CD14-positive monocyte (primary cell): ENCODE measurements at regions of chr17 and their contacts with region 1.

Region 1: GRCh38 chr17:7306911-7307686 is at the start of gene EIF5A:
- DNase-seq: peak; percentile 100
- H3K4me3 ChIP-seq: peak within 1 kb of the TSS; percentile 66 to 97 (median 72)
- H3K4me3 Mint-ChIP-seq: peak within 1 kb of the TSS; percentile 85 to 93
- H3K27ac ChIP-seq: peak within 1 kb of the TSS; percentile 95 to 96
- H3K27ac Mint-ChIP-seq: peak within 1 kb of the TSS; percentile 96 to 100 (median 99)
- H3K4me1 ChIP-seq: peaks cover 24 to 26% of the 10 kb centered on the region in 2 donors
- H3K4me1 Mint-ChIP-seq: peaks cover 21% of the 10 kb centered on the region
- H3K27me3 ChIP-seq: no peaks in the 10 kb centered on the region
- H3K27me3 Mint-ChIP-seq: peaks cover 0 to 5% (median 4%) of the 10 kb centered on the region in 3 donors
- CTCF ChIP-seq: no peak
- polyA plus RNA-seq, gene EIF5A: 465 to 511 (median 485) TPM

Region 2: GRCh38 chr17:7239091-7240027 is 67.7 kb before region 1 on chr17 and contains the start of gene PHF23:
- intact Hi-C with region 1: loop called (anchors 5 kb)
- DNase-seq: peak; percentile 98 to 99 (median 99)
- H3K4me3 ChIP-seq: peak within 1 kb of the TSS; percentile 95 to 100 (median 98)
- H3K4me3 Mint-ChIP-seq: peak within 1 kb of the TSS; percentile 98 to 99
- H3K27ac ChIP-seq: peak within 1 kb of the TSS; percentile 64 to 100
- H3K27ac Mint-ChIP-seq: peak within 1 kb of the TSS; percentile 99 to 100 (median 100)
- H3K4me1 ChIP-seq: peaks cover 54 to 64% of the 10 kb centered on the region in 2 donors
- H3K4me1 Mint-ChIP-seq: peaks cover 57% of the 10 kb centered on the region
- H3K27me3 ChIP-seq: no peaks in the 10 kb centered on the region
- H3K27me3 Mint-ChIP-seq: peaks cover 0 to 5% (median 0%) of the 10 kb centered on the region in 3 donors
- CTCF ChIP-seq: no peak
- polyA plus RNA-seq, gene PHF23: 12.0 to 18.0 (median 12.9) TPM

Region 3: DNA sequence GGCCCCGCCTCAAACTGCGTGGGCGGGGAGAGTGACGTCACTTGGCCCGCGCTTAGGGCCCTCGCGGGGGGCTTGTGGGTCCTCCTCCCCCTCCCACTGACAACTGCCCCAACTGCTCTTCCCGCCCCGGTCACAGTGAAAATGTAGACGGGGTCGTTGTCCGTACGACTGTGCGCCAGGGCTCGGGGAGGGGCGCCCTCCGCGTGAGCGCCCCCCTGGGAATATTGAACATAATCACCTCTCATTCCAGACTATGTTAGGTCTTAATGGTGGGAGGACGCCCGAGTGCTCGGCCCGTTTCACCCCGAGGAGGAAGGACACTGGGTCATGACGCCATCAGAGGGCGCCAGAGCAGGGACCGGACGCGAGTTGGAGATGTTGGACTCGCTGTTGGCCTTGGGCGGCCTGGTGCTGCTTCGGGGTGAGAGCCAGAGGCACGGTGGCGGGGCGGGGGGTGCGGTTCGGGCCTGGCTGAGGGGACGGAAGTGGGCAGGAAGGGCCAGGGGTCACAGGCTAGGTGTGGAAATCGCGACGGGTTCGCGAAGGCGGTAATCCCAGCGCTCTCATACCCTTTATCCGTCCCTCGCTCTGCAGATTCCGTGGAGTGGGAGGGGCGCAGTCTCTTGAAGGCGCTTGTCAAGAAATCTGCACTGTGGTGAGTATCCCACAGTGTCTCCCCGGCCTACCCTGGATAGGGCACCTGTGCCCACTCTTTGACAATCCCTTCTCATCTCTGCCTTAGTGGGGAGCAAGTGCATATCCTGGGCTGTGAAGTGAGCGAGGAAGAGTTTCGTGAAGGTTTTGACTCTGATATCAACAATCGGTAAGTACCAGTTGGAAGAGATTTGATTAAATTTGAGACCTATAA is 54.7 kb before region 1 on chr17 and contains the start of gene ELP5:
- intact Hi-C with region 1: loop called (anchors 2 to 5 kb)
- DNase-seq: peak; percentile 88 to 96 (median 93)
- H3K4me3 ChIP-seq: peak within 1 kb of the TSS; percentile 73 to 93 (median 87)
- H3K4me3 Mint-ChIP-seq: peak within 1 kb of the TSS; percentile 90 to 95
- H3K27ac ChIP-seq: peak within 1 kb of the TSS; percentile 100
- H3K27ac Mint-ChIP-seq: peak within 1 kb of the TSS; percentile 99 to 100 (median 100)
- H3K4me1 ChIP-seq: peaks cover 31 to 36% of the 10 kb centered on the region in 2 donors
- H3K4me1 Mint-ChIP-seq: peaks cover 34% of the 10 kb centered on the region
- H3K27me3 ChIP-seq: no peaks in the 10 kb centered on the region
- H3K27me3 Mint-ChIP-seq: no peaks in the 10 kb centered on the region
- CTCF ChIP-seq: peak; percentile 28
- polyA plus RNA-seq, gene ELP5: 36.1 to 49.5 (median 44.1) TPM

Region 4: DNA sequence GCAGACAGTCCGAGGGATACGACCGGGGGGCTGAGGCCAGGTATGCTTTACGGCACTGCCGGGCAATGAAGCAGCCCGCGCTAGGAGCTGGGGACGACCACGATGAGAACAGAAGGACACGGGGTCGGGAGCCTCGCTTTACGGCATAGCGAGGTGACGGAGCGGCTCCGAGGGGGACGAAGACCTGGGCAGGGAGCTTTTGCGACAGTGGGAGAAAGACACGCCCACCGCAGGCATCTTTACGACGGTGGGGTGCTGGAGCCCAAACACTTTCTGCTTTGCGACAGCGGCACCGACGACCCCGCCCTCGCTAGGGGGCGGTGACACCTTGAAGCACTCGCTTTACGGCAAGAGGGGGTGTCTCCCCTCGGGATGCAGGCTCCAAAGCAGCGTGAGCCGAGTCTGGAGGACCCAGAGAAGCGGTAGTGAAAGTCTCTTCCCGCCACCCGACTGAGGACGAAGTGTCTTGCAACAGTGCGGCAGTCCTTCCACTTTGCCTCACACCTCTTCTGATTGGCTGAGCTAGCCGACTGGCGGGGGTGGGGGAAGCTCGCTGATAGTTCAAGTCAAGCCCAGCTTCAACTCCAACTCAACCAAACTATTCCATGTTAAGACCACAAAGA is 22.4 kb after region 1 on chr17:
- intact Hi-C with region 1: loop called in 1 of 2 experiments (anchors 2 kb)
- DNase-seq: peak; percentile 92 to 100 (median 99)
- H3K4me3 ChIP-seq: peak overlapping the region; percentile 80 to 91 (median 81)
- H3K4me3 Mint-ChIP-seq: peak overlapping the region; percentile 91 to 98
- H3K27ac ChIP-seq: peak overlapping the region; percentile 92
- H3K27ac Mint-ChIP-seq: peak overlapping the region; percentile 96 to 100 (median 98)
- H3K4me1 ChIP-seq: peaks cover 34 to 39% of the 10 kb centered on the region in 2 donors
- H3K4me1 Mint-ChIP-seq: peaks cover 36% of the 10 kb centered on the region
- H3K27me3 ChIP-seq: no peaks in the 10 kb centered on the region
- H3K27me3 Mint-ChIP-seq: peaks cover 0 to 6% (median 0%) of the 10 kb centered on the region in 3 donors
- CTCF ChIP-seq: no peak

Region 5: GRCh38 chr17:7403977-7404736 is 97.1 kb after region 1 on chr17 and contains the start of gene TMEM256:
- intact Hi-C with region 1: no loop called
- DNase-seq: peak; percentile 98
- H3K4me3 ChIP-seq: peak within 1 kb of the TSS; percentile 57 to 86 (median 62)
- H3K4me3 Mint-ChIP-seq: peak within 1 kb of the TSS; percentile 86 to 95
- H3K27ac ChIP-seq: peak within 1 kb of the TSS; percentile 59 to 70
- H3K27ac Mint-ChIP-seq: peak within 1 kb of the TSS; percentile 88 to 99 (median 97)
- H3K4me1 ChIP-seq: peaks cover 13 to 24% of the 10 kb centered on the region in 2 donors
- H3K4me1 Mint-ChIP-seq: peaks cover 21% of the 10 kb centered on the region
- H3K27me3 ChIP-seq: peaks cover 4 to 33% of the 10 kb centered on the region in 2 donors
- H3K27me3 Mint-ChIP-seq: peaks cover 33 to 41% (median 34%) of the 10 kb centered on the region in 3 donors
- CTCF ChIP-seq: no peak
- polyA plus RNA-seq, gene TMEM256: 39.2 to 81.4 (median 72.6) TPM

Region 6: DNA sequence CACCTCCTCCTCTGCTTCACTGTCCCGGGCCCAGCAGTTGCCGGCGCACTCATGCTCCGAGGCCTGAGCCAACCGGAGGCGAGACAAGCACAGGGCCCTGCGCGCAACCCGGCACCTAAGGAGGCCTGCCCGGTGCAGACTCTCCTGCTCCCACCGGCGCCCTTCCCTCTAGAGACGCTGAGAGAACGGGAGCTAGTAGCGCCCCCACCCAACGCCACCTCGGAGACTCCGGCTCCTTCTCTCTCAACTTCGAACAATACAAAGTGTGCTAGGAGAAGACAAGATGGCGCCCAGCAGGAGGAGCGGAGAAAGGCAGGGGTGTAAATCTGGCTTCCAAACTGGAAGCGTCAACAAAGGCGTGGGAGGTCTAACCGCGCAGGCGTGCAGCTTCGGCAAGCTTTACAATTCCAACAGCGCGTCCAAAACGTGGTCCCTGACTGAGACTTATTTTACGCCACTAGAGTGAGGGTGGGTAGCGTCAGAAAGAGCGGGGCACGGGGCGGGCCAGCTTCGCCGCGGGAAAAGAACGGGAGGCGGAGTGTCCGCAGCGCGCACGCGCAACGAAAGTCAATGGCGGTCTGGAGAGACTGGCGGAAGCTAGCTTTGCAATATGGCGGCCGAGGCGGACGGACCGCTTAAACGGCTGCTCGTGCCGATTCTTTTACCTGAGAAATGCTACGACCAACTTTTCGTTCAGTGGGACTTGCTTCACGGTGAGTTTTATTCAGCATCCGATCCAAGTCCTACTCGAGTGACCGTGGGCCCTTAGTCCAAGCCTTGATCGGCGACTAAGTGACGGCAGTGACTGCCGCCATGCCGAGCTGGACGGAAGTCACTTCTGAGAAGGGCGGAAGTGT is 276.4 kb after region 1 on chr17 and contains the start of gene MPDU1:
- intact Hi-C with region 1: loop called in 1 of 2 experiments (anchors 5 kb)
- DNase-seq: peak; percentile 94 to 98 (median 97)
- H3K4me3 ChIP-seq: peak within 1 kb of the TSS; percentile 59 to 98 (median 60)
- H3K4me3 Mint-ChIP-seq: peak within 1 kb of the TSS; percentile 98 to 99
- H3K27ac ChIP-seq: peak within 1 kb of the TSS; percentile 99
- H3K27ac Mint-ChIP-seq: peak within 1 kb of the TSS; percentile 98 to 100 (median 100)
- H3K4me1 ChIP-seq: peaks cover 74 to 91% of the 10 kb centered on the region in 2 donors
- H3K4me1 Mint-ChIP-seq: peaks cover 70% of the 10 kb centered on the region
- H3K27me3 ChIP-seq: no peaks in the 10 kb centered on the region
- H3K27me3 Mint-ChIP-seq: peaks cover 0 to 6% (median 2%) of the 10 kb centered on the region in 3 donors
- CTCF ChIP-seq: no peak
- polyA plus RNA-seq, gene MPDU1: 100 to 107 (median 103) TPM